ENCODE measurements at regions of chr19 and their contacts with region 1.

Region 1: DNA sequence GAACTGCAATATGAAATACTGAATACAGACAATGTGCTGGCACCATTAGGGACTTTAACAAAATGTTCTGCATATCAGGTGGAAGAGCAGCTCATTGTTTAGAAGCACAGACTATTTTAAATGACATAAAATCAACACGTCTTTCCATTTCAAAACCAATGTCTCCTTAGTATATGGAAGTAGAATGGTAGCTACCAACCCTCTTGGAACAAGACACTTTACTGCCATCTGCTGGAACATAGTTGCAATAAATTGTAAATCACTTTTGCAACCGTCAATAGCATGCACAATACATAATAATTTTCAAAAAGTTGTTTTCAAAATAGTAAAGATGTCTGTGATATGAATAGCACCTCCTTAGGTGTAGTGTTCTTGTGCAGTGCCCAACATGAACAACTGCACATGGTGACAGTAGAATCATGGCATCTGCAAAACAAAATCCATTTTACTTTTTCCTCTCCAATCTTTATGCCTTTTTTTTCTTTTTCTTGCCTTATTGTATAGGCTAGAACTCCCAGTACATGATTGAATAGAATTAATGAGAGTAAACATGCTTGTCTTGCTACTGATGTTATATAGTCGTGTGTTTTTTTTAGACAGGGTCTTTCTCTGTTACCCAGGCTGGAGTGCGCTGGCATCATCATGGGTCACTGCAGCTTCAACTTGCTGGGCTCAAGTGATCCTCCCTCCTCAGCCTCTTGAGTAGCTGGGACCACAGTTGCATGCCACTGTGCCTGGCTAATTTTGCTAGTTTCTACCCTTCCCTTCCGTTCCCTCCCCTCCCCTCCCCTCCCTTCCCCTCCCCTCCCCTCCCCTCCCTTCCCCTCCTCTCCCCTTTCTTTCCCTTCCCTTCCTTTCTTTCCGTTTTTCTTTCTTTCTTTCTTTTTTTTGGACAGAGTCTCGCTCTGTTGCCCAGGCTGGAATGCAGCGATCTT is 7.8 kb upstream of the LYPD5 start:
- H3K4me3 ChIP-seq: no peak overlapping the region
- H3K27ac ChIP-seq: no peak overlapping the region
- H3K4me1 ChIP-seq: no peaks in the 10 kb centered on the region
- CTCF ChIP-seq: no peak

Region 2: GRCh38 chr19:43720936-43721335 is 89.1 kb before region 1 on chr19:
- CTCF ChIA-PET with region 1: no interaction called
- POLR2A ChIA-PET with region 1: no interaction called
- H3K4me3 ChIP-seq: no peak overlapping the region
- H3K27ac ChIP-seq: no peak overlapping the region
- H3K4me1 ChIP-seq: no peaks in the 10 kb centered on the region
- CTCF ChIP-seq: no peak

Region 3: GRCh38 chr19:43747557-43748204 is 62.3 kb before region 1 on chr19:
- CTCF ChIA-PET with region 1: interaction called, 52 read pairs
- POLR2A ChIA-PET with region 1: interaction called, 7 read pairs
- H3K4me3 ChIP-seq: no peak overlapping the region
- H3K27ac ChIP-seq: 0 out of 2 replicates have a peak overlapping the region, but pooled peaks have one; percentile 17
- H3K4me1 ChIP-seq: no peaks in the 10 kb centered on the region; the same call in 1 of the 2 replicates
- CTCF ChIP-seq: no peak

Region 4: GRCh38 chr19:43754503-43755255 is 55.4 kb before region 1 on chr19 and contains the start of gene SMG9:
- CTCF ChIA-PET with region 1: interaction called, 15 read pairs
- POLR2A ChIA-PET with region 1: interaction called, 4 read pairs
- H3K4me3 ChIP-seq: peak within 1 kb of the TSS; percentile 60
- H3K27ac ChIP-seq: peak within 1 kb of the TSS; percentile 100
- H3K4me1 ChIP-seq: peaks cover 32% of the 10 kb centered on the region
- CTCF ChIP-seq: no peak; the same call in 1 of the 2 replicates

Region 5: DNA sequence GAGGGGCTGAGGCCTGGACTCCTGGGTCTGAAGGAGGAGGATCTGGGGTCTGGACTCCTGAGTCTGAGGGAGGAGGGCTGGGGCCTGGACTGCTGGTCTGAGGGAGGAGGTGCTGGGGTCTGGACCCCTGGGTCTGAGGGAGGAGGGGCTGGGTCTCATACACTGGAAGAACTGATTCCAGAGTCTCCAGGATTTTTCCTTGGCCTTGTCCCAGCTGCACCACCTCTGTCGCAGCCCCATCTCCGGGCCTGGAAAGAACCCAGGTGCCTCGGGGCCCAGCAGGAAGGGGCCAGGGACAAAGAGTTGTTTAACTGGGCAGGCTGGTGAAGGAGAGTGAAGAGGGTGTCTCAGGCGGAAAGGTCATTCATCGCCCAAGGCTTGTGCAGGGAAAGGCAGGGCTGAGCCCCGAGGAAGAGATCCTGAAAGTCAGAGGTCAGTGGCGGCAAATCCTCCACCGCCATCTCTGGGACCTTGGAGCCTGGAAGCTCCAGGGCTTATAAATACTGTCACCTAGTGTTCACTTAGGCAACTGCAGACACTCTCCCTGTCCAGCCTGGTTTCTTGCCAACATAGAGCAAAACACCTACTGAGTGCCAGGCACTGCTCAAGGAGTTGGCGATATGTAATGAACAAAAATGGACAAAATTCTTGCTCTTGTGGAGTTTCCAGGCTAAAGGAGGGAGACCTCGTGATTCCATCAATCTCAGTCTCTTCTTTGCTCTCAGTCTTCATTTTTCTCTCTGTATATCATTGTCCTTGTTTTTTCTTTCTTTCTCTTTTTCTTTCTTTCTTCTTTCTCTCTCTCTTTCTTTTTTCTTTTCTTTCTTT is 24.8 kb before region 1 on chr19:
- CTCF ChIA-PET with region 1: interaction called, 24 read pairs
- POLR2A ChIA-PET with region 1: no interaction called
- H3K4me3 ChIP-seq: no peak overlapping the region
- H3K27ac ChIP-seq: no peak overlapping the region
- H3K4me1 ChIP-seq: no peaks in the 10 kb centered on the region; the same call in 1 of the 2 replicates
- CTCF ChIP-seq: peak; percentile 99

Region 6: GRCh38 chr19:43798546-43799409 is 11.3 kb before region 1 on chr19:
- CTCF ChIA-PET with region 1: interaction called, 19 read pairs
- POLR2A ChIA-PET with region 1: no interaction called
- H3K4me3 ChIP-seq: peak overlapping the region; percentile 15
- H3K27ac ChIP-seq: no peak overlapping the region
- H3K4me1 ChIP-seq: peaks cover 8% of the 10 kb centered on the region; the same call in 1 of the 2 replicates
- CTCF ChIP-seq: no peak

Region 7: GRCh38 chr19:43820098-43820883 is 10.3 kb after region 1 on chr19:
- CTCF ChIA-PET with region 1: interaction called, 25 read pairs
- POLR2A ChIA-PET with region 1: no interaction called
- H3K4me3 ChIP-seq: no peak overlapping the region
- H3K27ac ChIP-seq: no peak overlapping the region
- H3K4me1 ChIP-seq: no peaks in the 10 kb centered on the region
- CTCF ChIP-seq: no peak